ENCODE measurements at regions of chr11 and their contacts with region 1.

Region 1: GRCh38 chr11:123246749-123247495 is 51.9 kb upstream of the CLMP start:
- DNase-seq: peak; percentile 62 to 85 (median 77)
- ATAC-seq: peak; percentile 93
- H3K4me3 ChIP-seq: no peak overlapping the region
- H3K4me3 Mint-ChIP-seq: peak overlapping the region in 6 of 10 donors; percentile 39 to 66 (median 49)
- H3K27ac ChIP-seq: no peak overlapping the region
- H3K27ac Mint-ChIP-seq: no peak overlapping the region
- H3K4me1 ChIP-seq: no peaks in the 10 kb centered on the region
- H3K4me1 Mint-ChIP-seq: peaks cover 0 to 13% (median 5%) of the 10 kb centered on the region in 7 donors
- H3K27me3 ChIP-seq: no peaks in the 10 kb centered on the region
- H3K27me3 Mint-ChIP-seq: peaks cover 5 to 47% (median 12%) of the 10 kb centered on the region in 5 donors

Region 2: DNA sequence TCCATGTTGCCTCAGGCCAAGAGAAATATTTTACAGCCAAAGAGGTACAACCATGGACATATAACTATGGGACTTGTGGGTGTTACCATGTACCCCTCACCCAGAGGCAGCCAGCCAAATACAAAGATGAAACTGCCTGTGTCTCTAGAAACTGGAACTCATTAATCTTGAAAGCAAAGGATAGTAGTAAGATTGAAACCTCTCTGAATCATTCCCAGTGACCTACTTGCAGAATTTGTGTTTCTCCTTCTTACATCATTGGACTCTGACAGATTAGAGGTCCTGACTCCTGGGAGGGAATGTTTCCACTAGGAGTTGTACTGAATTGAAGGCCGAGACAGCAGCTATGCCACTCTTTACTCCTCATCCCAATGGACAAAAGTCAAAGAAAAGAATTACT is 848.8 kb before region 1 on chr11:
- CTCF ChIA-PET with region 1: no interaction called
- POLR2A ChIA-PET with region 1: no interaction called
- intact Hi-C with region 1: no loop called
- DNase-seq: no peak
- ATAC-seq: no peak
- H3K4me3 ChIP-seq: no peak overlapping the region
- H3K4me3 Mint-ChIP-seq: no peak overlapping the region
- H3K27ac ChIP-seq: no peak overlapping the region
- H3K27ac Mint-ChIP-seq: no peak overlapping the region
- H3K4me1 ChIP-seq: no peaks in the 10 kb centered on the region
- H3K4me1 Mint-ChIP-seq: peaks cover 0 to 2% (median 0%) of the 10 kb centered on the region in 7 donors
- H3K27me3 ChIP-seq: no peaks in the 10 kb centered on the region
- H3K27me3 Mint-ChIP-seq: peaks cover under 1 to 10% (median 6%) of the 10 kb centered on the region in 5 donors

Region 3: DNA sequence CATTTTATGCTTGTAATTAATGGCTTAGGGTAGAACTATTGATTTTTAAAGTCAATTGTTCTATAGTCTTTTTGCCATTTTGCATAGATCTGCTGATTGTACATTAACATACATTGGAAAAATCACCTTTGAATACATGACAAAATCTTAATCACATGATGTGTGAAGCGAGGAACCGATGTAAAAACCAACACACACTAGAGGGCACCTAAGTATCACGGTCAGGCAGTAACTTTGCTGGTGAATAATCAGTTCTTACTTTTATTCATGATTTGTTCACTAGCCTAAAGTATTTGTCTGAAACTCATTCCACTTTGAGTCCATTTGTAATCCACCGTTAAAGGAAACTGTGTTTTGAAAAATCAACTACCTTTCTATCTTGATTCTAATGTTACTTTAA is 336.1 kb before region 1 on chr11:
- CTCF ChIA-PET with region 1: no interaction called
- POLR2A ChIA-PET with region 1: no interaction called
- intact Hi-C with region 1: loop called in 1 of 2 experiments (anchors 1 kb)
- DNase-seq: peak in 1 of 9 donors; percentile 11
- ATAC-seq: no peak
- H3K4me3 ChIP-seq: no peak overlapping the region
- H3K4me3 Mint-ChIP-seq: no peak overlapping the region
- H3K27ac ChIP-seq: no peak overlapping the region
- H3K27ac Mint-ChIP-seq: no peak overlapping the region
- H3K4me1 ChIP-seq: no peaks in the 10 kb centered on the region
- H3K4me1 Mint-ChIP-seq: peaks cover 0 to 2% (median 0%) of the 10 kb centered on the region in 7 donors
- H3K27me3 ChIP-seq: no peaks in the 10 kb centered on the region
- H3K27me3 Mint-ChIP-seq: no peaks in the 10 kb centered on the region

Region 4: DNA sequence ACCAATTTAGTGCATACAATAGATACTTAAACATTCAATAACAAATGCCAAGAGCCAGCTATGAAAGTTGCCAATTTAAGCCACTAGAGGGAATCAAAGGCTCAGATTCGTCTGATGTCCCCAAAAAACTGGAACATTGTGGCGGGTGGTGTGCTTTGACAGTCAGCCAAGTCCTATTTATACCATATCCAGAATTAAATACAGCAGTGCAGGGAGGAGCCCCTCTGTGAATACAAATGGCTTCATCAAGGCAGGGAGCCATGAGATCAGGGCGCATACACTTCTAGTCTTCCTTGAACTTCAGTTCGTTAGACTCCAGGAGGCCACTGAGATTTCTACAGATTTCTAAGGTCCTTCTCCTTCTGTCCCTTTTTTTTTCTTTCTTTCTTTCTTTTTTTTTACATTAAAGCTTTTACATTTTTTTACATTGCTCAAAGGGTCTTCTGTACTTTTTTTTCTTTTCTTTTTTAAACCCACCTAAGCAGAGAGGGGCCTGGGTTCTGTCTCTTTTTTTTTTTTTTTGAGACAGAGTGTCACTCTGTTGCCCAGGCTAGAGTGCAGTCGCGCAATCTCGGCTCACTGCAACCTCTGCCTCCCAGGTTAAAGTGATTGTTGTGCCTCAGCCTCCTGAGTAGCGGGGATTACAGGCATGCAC is 143.5 kb before region 1 on chr11:
- CTCF ChIA-PET with region 1: interaction called, 42 read pairs
- POLR2A ChIA-PET with region 1: interaction called, 4 read pairs
- intact Hi-C with region 1: loop called in 1 of 2 experiments (anchors 1 kb)
- DNase-seq: peak in 7 of 9 donors; percentile 38 to 63 (median 51)
- ATAC-seq: peak; percentile 76
- H3K4me3 ChIP-seq: no peak overlapping the region
- H3K4me3 Mint-ChIP-seq: peak overlapping the region in 5 of 10 donors; percentile 14 to 63 (median 14)
- H3K27ac ChIP-seq: no peak overlapping the region
- H3K27ac Mint-ChIP-seq: peak overlapping the region in 8 of 9 donors; percentile 8 to 91 (median 51)
- H3K4me1 ChIP-seq: peaks cover 0 to 15% of the 10 kb centered on the region in 2 donors
- H3K4me1 Mint-ChIP-seq: peaks cover 16 to 43% (median 38%) of the 10 kb centered on the region in 7 donors
- H3K27me3 ChIP-seq: no peaks in the 10 kb centered on the region
- H3K27me3 Mint-ChIP-seq: peaks cover 0 to 7% (median 0%) of the 10 kb centered on the region in 5 donors

Region 5: GRCh38 chr11:123166071-123166559 is 80.8 kb before region 1 on chr11:
- CTCF ChIA-PET with region 1: no interaction called
- POLR2A ChIA-PET with region 1: no interaction called
- intact Hi-C with region 1: loop called in 1 of 2 experiments (anchors 1 kb)
- DNase-seq: peak in 1 of 9 donors; percentile 24
- ATAC-seq: no peak
- H3K4me3 ChIP-seq: no peak overlapping the region
- H3K4me3 Mint-ChIP-seq: no peak overlapping the region
- H3K27ac ChIP-seq: no peak overlapping the region
- H3K27ac Mint-ChIP-seq: peak overlapping the region in 1 of 9 donors; percentile 38
- H3K4me1 ChIP-seq: no peaks in the 10 kb centered on the region
- H3K4me1 Mint-ChIP-seq: peaks cover 0 to 1% (median 0%) of the 10 kb centered on the region in 7 donors
- H3K27me3 ChIP-seq: no peaks in the 10 kb centered on the region
- H3K27me3 Mint-ChIP-seq: peaks cover 0 to 14% (median 5%) of the 10 kb centered on the region in 5 donors

Region 6: GRCh38 chr11:123206791-123207434 is 40.0 kb before region 1 on chr11:
- CTCF ChIA-PET with region 1: no interaction called
- POLR2A ChIA-PET with region 1: no interaction called
- intact Hi-C with region 1: no loop called
- DNase-seq: no peak
- ATAC-seq: no peak
- H3K4me3 ChIP-seq: no peak overlapping the region
- H3K4me3 Mint-ChIP-seq: no peak overlapping the region
- H3K27ac ChIP-seq: no peak overlapping the region
- H3K27ac Mint-ChIP-seq: no peak overlapping the region
- H3K4me1 ChIP-seq: no peaks in the 10 kb centered on the region
- H3K4me1 Mint-ChIP-seq: peaks cover 0 to 2% (median 0%) of the 10 kb centered on the region in 7 donors
- H3K27me3 ChIP-seq: peaks cover 0 to 4% of the 10 kb centered on the region in 2 donors
- H3K27me3 Mint-ChIP-seq: peaks cover 15 to 64% (median 37%) of the 10 kb centered on the region in 5 donors

Region 7: DNA sequence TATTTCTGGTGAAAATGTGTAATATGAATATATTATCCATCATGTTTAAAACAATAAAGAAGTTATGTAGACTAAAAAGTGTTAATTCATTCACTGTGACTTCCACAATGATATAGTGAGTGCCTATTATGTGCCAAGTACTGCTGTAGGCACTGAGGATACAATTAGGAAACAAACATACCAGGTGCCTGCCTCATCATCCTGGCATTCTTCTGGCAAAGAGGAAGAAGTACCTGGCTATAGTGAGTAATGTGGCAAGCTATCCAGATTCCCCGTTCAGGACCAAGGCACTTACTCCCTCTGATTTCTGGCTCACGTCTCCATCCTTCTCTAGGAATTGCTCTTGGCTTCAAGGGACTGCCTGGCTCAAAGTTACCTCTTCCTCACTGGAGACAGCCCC is 25.6 kb after region 1 on chr11:
- CTCF ChIA-PET with region 1: no interaction called
- POLR2A ChIA-PET with region 1: no interaction called
- intact Hi-C with region 1: no loop called
- DNase-seq: no peak
- ATAC-seq: no peak
- H3K4me3 ChIP-seq: no peak overlapping the region
- H3K4me3 Mint-ChIP-seq: no peak overlapping the region
- H3K27ac ChIP-seq: no peak overlapping the region
- H3K27ac Mint-ChIP-seq: no peak overlapping the region
- H3K4me1 ChIP-seq: no peaks in the 10 kb centered on the region
- H3K4me1 Mint-ChIP-seq: peaks cover 0 to 7% (median 0%) of the 10 kb centered on the region in 7 donors
- H3K27me3 ChIP-seq: no peaks in the 10 kb centered on the region
- H3K27me3 Mint-ChIP-seq: peaks cover 0 to 14% (median 6%) of the 10 kb centered on the region in 5 donors

Region 8: GRCh38 chr11:123438191-123438627 is 191.3 kb after region 1 on chr11:
- CTCF ChIA-PET with region 1: no interaction called
- POLR2A ChIA-PET with region 1: no interaction called
- intact Hi-C with region 1: no loop called
- DNase-seq: no peak
- ATAC-seq: no peak
- H3K4me3 ChIP-seq: no peak overlapping the region
- H3K4me3 Mint-ChIP-seq: peak overlapping the region in 2 of 10 donors; percentile 3 to 69
- H3K27ac ChIP-seq: no peak overlapping the region
- H3K27ac Mint-ChIP-seq: peak overlapping the region in 2 of 9 donors; percentile 69 to 89
- H3K4me1 ChIP-seq: no peaks in the 10 kb centered on the region
- H3K4me1 Mint-ChIP-seq: peaks cover 0 to 88% (median 13%) of the 10 kb centered on the region in 7 donors
- H3K27me3 ChIP-seq: no peaks in the 10 kb centered on the region
- H3K27me3 Mint-ChIP-seq: no peaks in the 10 kb centered on the region

Measured in naive thymus-derived CD4-positive, alpha-beta T cell (primary cell).